Aorta (tissue), 5 donors: ENCODE measurements at regions of chr20 and their contacts with region 1.

Region 1: GRCh38 chr20:63009045-63009961 is 2.5 kb upstream of the BHLHE23 start:
- DNase-seq: peak; percentile 79 to 94
- ATAC-seq: peak; percentile 87
- H3K4me3 ChIP-seq: no peak overlapping the region
- H3K27ac ChIP-seq: no peak overlapping the region
- H3K4me1 ChIP-seq: no peaks in the 10 kb centered on the region
- H3K27me3 ChIP-seq: no peaks in the 10 kb centered on the region

Region 2: DNA sequence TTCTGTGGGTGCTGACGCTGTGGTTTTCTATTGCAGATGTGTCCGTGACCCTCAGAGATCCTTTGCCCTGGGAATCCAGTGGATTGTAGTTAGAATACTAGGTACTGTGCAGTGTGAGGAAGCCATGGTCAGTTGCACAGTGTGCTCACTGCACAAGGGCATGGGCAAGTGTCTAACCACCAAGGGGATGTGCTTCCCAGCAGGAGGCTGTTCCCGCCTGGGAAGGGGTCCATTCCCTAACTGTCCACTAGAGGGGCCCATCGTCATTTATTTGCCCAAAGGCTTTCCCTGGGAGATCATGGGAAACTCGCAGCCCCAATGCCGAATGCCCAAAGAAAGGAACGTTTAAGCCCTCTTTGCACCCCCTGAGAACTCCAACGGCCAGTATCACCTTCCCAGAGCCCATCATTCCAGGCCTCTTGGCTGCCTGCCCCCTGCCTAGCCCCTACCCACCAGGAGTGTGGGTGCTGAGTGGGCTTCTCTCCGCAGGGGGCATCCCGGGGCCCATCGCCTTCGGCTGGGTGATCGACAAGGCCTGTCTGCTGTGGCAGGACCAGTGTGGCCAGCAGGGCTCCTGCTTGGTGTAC is 340.8 kb before region 1 on chr20:
- intact Hi-C with region 1: loop called in 1 of 2 experiments (anchors 10 kb)
- DNase-seq: peak in 1 of 2 donors; percentile 74
- ATAC-seq: peak; percentile 67
- H3K4me3 ChIP-seq: no peak overlapping the region
- H3K27ac ChIP-seq: no peak overlapping the region
- H3K4me1 ChIP-seq: no peaks in the 10 kb centered on the region
- H3K27me3 ChIP-seq: no peaks in the 10 kb centered on the region

Region 3: DNA sequence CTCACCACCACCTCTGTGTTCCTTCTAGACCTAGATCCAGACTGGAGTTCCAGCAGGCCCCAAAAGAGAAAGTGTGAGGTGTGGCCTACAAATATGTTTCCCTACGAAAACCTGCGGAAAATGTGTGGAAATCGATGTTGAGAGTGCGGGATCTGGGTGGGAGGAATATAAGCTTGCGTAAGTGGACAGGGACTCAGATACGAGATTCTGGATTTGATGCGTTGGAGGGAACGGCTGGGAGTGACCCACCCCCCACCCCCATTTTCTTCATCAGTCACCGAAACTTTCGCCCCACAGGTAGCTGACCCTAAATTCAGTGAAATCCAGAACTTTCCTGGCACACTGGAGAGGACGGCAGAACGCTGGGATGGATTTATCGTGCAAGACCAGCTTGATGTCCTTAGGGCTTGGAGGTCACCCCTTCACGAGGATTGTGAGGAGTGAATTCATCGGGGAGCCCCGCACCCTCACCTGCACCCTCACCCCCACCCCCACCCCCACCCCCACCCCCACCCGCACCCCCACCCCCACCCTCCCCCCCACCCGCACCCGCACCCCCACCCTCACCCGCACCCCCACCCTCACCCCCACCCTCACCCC is 134.5 kb before region 1 on chr20:
- intact Hi-C with region 1: loop called (anchors 2 to 5 kb)
- DNase-seq: peak in 1 of 2 donors; percentile 28
- ATAC-seq: no peak
- H3K4me3 ChIP-seq: no peak overlapping the region
- H3K27ac ChIP-seq: no peak overlapping the region
- H3K4me1 ChIP-seq: no peaks in the 10 kb centered on the region
- H3K27me3 ChIP-seq: no peaks in the 10 kb centered on the region

Region 4: DNA sequence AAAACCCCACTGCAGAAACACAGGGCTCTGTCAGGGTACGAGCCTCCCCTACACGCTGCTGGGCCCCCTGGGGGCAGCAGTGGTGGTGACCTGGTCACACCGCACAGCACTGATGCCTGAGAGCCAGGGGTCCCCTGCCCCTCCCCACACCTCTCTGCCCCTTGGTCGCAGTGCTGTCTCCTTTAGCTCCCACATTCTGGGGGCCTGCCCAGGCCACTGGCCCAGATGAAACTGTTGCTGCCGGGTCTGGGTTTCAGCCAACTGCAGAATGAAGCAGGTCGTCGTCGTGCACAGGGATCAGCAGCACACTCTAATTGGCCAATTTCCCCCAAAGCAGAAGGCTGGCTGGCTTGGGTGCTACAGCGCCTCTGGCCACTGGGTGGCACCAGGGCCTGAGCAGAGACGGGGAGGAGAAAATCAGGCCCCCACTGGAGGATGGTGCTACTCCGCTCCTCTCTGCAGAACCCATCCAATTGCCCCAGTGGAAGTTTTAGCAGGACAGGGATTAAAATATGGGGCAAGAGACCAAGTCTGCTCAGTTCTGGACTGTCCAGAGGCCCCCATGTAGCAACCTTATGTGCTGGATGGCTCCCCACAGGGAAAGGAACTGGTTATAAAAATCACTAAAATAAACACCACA is 109.1 kb before region 1 on chr20:
- intact Hi-C with region 1: loop called in 1 of 2 experiments (anchors 2 kb)
- DNase-seq: peak; percentile 80 to 87
- ATAC-seq: peak; percentile 93
- H3K4me3 ChIP-seq: no peak overlapping the region
- H3K27ac ChIP-seq: no peak overlapping the region
- H3K4me1 ChIP-seq: no peaks in the 10 kb centered on the region
- H3K27me3 ChIP-seq: no peaks in the 10 kb centered on the region

Region 5: GRCh38 chr20:62972270-62973032 is 36.9 kb before region 1 on chr20:
- intact Hi-C with region 1: loop called (anchors 1 to 2 kb)
- DNase-seq: peak; percentile 93 to 95
- ATAC-seq: peak; percentile 91
- H3K4me3 ChIP-seq: no peak overlapping the region
- H3K27ac ChIP-seq: no peak overlapping the region
- H3K4me1 ChIP-seq: no peaks in the 10 kb centered on the region
- H3K27me3 ChIP-seq: no peaks in the 10 kb centered on the region

Region 6: DNA sequence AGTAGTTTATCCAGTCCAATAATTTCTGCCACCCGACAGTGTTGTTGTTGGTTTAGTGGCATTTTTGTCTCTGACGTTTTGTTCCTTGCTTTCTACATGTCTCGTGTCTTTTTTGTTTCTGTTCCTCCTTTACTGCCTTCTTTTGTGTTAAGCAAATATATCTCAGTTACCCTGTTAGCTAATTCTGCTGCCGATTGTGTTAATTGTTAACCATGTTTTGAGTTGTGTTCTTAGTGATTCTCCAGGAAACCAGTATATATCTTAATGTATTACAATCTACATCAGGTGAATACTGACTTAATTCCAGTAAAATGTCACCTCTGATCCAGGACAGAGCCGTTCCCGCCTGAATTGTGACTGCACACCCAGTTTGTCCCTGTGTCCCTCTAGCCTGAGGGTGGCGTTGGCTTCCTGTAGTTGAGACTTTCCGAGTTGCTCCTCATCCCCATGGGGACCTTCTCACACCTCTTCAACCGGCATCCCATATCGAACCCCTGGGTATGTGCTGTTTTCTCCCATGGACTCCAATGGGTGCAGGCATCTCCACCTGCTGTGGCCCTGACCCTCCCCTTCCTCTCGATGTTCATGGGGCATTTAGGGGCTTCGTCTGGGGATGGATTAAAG is 33.3 kb after region 1 on chr20:
- intact Hi-C with region 1: no loop called
- DNase-seq: peak; percentile 6 to 15
- ATAC-seq: no peak
- H3K4me3 ChIP-seq: no peak overlapping the region
- H3K27ac ChIP-seq: no peak overlapping the region
- H3K4me1 ChIP-seq: no peaks in the 10 kb centered on the region
- H3K27me3 ChIP-seq: no peaks in the 10 kb centered on the region

Region 7: GRCh38 chr20:63056236-63056948 is 47.1 kb after region 1 on chr20:
- intact Hi-C with region 1: no loop called
- DNase-seq: peak; percentile 52 to 79
- ATAC-seq: peak; percentile 60
- H3K4me3 ChIP-seq: no peak overlapping the region
- H3K27ac ChIP-seq: no peak overlapping the region
- H3K4me1 ChIP-seq: no peaks in the 10 kb centered on the region
- H3K27me3 ChIP-seq: no peaks in the 10 kb centered on the region